Left cardiac atrium (tissue), 4 donors: ENCODE measurements at regions of chr20 and their contacts with region 1.

Region 1: GRCh38 chr20:32031007-32031958 is 20.8 kb upstream of the HCK start:
- DNase-seq: peak; percentile 86
- ATAC-seq: peak; percentile 90 to 91

Region 2: DNA sequence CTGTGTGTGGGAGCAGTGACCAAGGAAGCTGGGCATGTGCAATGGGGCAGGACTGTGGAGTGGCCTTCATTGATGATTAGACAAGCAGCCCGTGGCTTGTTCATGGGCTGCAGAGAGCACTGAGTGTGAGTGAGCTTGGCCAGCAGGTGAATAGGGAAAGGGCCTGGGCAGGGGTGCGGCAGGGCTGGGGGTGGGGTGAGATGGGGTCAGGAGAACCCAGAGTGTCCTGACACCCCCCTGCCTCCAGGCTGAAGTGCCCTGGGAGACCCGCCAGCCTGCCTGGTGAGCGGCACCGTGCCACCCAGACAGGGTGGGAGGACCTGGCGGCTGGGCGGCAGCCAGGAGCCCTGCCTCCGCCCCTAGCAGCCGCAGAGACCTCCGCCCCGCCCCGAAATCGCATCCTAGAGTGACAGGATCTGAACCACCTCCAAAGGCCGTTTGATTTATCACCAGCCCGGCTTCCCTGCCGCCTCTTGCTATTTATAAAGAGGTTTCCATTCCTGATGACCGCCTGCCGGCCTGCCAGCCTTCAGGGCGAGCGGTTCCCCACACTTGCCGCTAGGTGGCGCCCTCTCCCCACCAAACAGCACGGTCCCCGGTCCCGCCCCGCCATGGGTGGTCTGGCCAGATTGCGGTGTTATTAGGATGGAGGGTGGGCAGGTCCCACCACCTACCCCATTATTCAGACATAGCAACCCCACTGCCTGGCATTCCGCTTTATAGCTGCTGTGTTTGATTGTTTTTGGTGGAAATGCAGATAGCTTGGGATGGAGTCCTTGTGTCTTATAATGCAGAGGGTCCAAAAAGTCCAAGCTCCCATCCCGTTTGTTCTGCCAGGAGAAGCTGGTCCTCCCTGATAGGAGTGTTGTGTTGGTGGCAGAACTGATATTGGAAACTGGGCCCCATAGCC is 208.6 kb before region 1 on chr20:
- intact Hi-C with region 1: loop called (anchors 5 to 10 kb)
- DNase-seq: peak; percentile 80
- ATAC-seq: peak; percentile 84 to 86

Region 3: DNA sequence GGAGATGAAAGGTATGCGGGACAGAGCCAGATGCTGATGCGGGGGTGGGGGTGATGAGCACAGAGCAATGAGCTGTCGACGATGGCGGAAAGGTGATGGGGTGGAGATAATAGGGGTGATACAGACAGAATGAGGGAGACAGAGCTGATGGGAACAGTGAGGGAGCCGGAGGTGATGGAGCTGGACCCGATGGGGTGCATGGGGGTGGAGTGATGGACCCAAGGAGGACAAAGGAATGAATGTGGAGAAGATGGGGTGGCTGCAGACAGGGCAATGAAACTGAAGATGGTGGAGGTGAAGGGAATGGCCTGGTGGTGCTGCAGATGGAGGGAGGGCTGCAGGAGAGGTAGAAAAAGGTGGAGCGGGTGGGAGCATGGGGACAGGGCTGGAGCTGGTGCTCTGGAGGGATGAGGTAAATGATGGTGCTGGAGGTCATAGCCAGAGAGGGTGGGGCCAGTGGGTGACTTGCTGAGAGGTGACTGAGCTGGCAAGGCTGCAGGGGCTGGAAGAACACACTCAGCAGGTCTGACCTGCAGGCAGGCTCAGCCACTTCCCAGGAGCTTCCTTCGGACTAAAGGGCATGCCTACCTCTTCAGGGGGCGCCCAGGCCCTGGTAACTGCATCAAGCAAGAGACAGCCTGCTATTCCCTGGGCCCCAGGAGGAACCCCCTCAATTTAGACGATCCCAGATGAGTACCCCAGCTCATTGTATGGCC is 179.9 kb before region 1 on chr20:
- intact Hi-C with region 1: loop called (anchors 2 to 5 kb)
- DNase-seq: no peak
- ATAC-seq: no peak

Region 4: DNA sequence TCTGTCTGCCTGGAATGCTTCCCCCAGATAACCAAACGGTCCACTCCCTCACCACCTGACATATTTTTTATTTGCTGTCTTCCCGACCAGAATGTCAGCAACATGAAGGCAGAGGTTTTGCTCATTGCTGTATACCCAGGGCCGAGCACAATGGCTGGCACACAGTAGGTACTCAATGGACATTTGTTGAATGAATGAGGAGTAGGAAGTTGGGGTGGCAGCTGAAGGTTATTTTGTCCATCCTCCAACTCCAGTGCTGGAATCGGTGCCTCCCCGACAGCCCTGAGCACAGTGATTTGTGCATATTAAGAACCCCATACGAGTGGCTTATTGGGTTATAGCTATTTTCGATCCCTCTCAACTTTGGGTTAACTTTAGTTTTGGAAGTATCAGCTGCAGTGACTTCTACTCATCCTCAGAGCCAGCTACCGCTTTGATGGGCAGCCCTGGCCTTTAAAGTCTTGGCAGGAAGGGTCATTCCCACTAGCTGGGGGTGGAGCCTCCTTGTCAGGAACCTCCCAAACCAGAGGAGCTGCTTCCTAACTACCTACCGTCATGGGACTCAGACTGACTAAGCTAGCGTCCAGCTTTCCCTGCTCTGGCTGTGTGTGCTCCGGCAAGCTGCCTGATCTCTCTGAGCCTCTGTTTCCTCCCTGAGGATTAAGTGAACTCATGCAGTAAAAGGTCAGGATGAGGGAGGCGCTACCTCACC is 171.1 kb before region 1 on chr20:
- intact Hi-C with region 1: loop called in 1 of 2 experiments (anchors 2 kb)
- DNase-seq: no peak
- ATAC-seq: peak in 1 of 2 donors; percentile 79

Region 5: GRCh38 chr20:32336918-32337347 is 305.6 kb after region 1 on chr20:
- intact Hi-C with region 1: no loop called
- DNase-seq: no peak
- ATAC-seq: peak in 1 of 2 donors; percentile 50